ENCODE measurements at regions of chr14 and their contacts with region 1.

Region 1: GRCh38 chr14:101761032-101761880 is at the start of gene PPP2R5C:
- DNase-seq: peak; percentile 81
- ATAC-seq: peak; percentile 63
- H3K4me3 Mint-ChIP-seq: peak within 1 kb of the TSS; percentile 88
- H3K27ac Mint-ChIP-seq: peak within 1 kb of the TSS; percentile 77
- H3K4me1 Mint-ChIP-seq: peaks cover 18% of the 10 kb centered on the region
- H3K27me3 Mint-ChIP-seq: no peaks in the 10 kb centered on the region
- CTCF ChIP-seq: no peak
- total RNA-seq, gene PPP2R5C: 197 and 227 TPM in 2 replicates

Region 2: GRCh38 chr14:101731187-101732080 is 29.8 kb before region 1 on chr14:
- CTCF ChIA-PET with region 1: no interaction called
- POLR2A ChIA-PET with region 1: interaction called, 6 read pairs
- intact Hi-C with region 1: loop called (anchors 1 kb)
- DNase-seq: peak; percentile 34
- ATAC-seq: peak; percentile 96
- H3K4me3 Mint-ChIP-seq: peak overlapping the region; percentile 16
- H3K27ac Mint-ChIP-seq: peak overlapping the region; percentile 54
- H3K4me1 Mint-ChIP-seq: peaks cover 22% of the 10 kb centered on the region
- H3K27me3 Mint-ChIP-seq: peaks cover 3% of the 10 kb centered on the region
- CTCF ChIP-seq: no peak

Region 3: DNA sequence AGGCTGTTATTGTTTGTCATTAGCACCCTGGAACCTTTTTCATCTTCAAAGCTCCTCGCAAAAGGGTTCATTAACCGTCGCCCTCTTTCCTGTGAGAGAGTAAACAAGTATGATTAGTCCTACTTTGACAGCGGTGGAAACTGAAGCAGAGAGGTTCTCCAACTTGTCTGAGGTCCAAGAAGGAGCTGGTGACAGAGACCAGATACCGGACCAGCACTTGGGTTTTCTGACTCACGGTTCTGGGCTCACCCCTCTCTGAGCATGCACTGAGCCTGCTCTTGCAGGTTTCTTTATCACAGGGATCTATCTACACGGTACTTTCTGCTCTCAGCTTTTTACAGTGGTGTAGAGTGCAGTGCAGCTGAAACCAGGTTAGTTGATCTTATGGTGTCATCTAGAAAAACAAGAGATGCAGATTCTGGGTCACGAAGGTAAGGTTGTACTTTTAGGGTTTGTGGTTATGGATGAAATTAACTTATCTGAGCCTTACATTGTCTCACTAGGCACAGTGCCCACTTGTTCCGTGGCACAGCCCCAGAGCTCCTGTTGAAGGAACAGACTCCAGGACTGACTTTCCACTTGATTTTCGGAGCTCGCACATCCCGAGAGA is 62.4 kb after region 1 on chr14:
- CTCF ChIA-PET with region 1: no interaction called
- POLR2A ChIA-PET with region 1: interaction called, 15 read pairs
- intact Hi-C with region 1: no loop called
- DNase-seq: no peak
- ATAC-seq: peak; percentile 31
- H3K4me3 Mint-ChIP-seq: peak overlapping the region; percentile 80
- H3K27ac Mint-ChIP-seq: peak overlapping the region; percentile 99
- H3K4me1 Mint-ChIP-seq: peaks cover 91% of the 10 kb centered on the region
- H3K27me3 Mint-ChIP-seq: no peaks in the 10 kb centered on the region
- CTCF ChIP-seq: no peak

Region 4: DNA sequence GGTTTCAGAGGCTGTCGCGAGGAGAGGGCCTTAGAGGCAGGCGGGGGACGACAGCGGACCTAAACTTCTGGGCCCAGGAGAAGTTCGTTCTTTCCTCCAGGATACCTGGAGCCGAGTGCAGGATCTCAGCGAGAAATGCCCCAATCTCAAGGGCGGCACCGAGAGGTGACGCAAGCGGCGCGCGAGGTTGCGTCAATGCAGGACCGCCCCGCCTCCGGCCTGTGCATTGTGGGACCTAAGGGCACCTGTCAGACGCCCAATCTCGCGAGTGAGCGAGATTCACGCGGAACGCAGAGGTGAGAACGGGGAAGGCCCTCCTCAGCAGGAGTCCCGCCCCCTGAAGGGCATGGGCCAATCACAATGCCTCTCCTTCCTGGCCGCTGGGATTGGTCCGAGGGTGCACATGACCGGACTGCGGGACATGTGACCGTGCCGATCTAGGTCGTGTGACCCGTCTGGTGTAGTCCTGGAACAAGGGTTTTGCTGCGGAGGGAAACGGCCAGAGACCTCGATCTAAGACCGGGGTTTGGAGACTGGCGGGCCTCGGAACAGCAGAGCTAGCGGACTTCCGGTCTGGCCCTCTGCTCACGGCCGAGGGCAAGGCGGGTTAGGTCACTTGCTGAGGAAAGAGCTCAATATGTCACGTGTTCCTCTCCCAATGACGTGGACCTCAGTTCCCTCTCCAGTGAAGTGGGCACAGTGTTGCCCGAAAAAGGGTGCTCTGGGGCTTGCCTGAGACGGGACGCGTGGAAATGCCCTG is 186.8 kb after region 1 on chr14:
- CTCF ChIA-PET with region 1: no interaction called
- POLR2A ChIA-PET with region 1: interaction called, 13 read pairs
- intact Hi-C with region 1: loop called (anchors 1 kb)
- DNase-seq: peak; percentile 98
- ATAC-seq: peak; percentile 95
- H3K4me3 Mint-ChIP-seq: peak overlapping the region; percentile 93
- H3K27ac Mint-ChIP-seq: peak overlapping the region; percentile 97
- H3K4me1 Mint-ChIP-seq: peaks cover 19% of the 10 kb centered on the region
- H3K27me3 Mint-ChIP-seq: peaks cover 22% of the 10 kb centered on the region
- CTCF ChIP-seq: no peak

Region 5: GRCh38 chr14:102139248-102140026 is 378.2 kb after region 1 on chr14 and contains the start of gene WDR20:
- CTCF ChIA-PET with region 1: no interaction called
- POLR2A ChIA-PET with region 1: no interaction called
- intact Hi-C with region 1: loop called (anchors 2 kb)
- DNase-seq: peak; percentile 99
- ATAC-seq: peak; percentile 94
- H3K4me3 Mint-ChIP-seq: peak within 1 kb of the TSS; percentile 97
- H3K27ac Mint-ChIP-seq: peak within 1 kb of the TSS; percentile 93
- H3K4me1 Mint-ChIP-seq: peaks cover 19% of the 10 kb centered on the region
- H3K27me3 Mint-ChIP-seq: no peaks in the 10 kb centered on the region
- CTCF ChIP-seq: no peak
- total RNA-seq, gene WDR20: 41.1 and 42.3 TPM in 2 replicates

Region 6: GRCh38 chr14:102272392-102272791 is 511.1 kb after region 1 on chr14:
- CTCF ChIA-PET with region 1: no interaction called
- POLR2A ChIA-PET with region 1: no interaction called
- intact Hi-C with region 1: no loop called
- DNase-seq: no peak
- ATAC-seq: no peak
- H3K4me3 Mint-ChIP-seq: no peak overlapping the region
- H3K27ac Mint-ChIP-seq: no peak overlapping the region
- H3K4me1 Mint-ChIP-seq: no peaks in the 10 kb centered on the region
- H3K27me3 Mint-ChIP-seq: peaks cover 7% of the 10 kb centered on the region
- CTCF ChIP-seq: no peak

Region 7: GRCh38 chr14:102362545-102363181 is 601.4 kb after region 1 on chr14 and contains the starts of genes CINP and TECPR2:
- CTCF ChIA-PET with region 1: no interaction called
- POLR2A ChIA-PET with region 1: no interaction called
- intact Hi-C with region 1: loop called (anchors 1 kb)
- DNase-seq: peak; percentile 92
- ATAC-seq: peak; percentile 82
- H3K4me3 Mint-ChIP-seq: no peak within 1 kb of the TSS
- H3K27ac Mint-ChIP-seq: peak within 1 kb of the TSS; percentile 97
- H3K4me1 Mint-ChIP-seq: peaks cover 35% of the 10 kb centered on the region
- H3K27me3 Mint-ChIP-seq: no peaks in the 10 kb centered on the region
- CTCF ChIP-seq: no peak
- total RNA-seq, gene CINP: 48.6 and 57.5 TPM in 2 replicates
- total RNA-seq, gene TECPR2: 9.9 and 11.8 TPM in 2 replicates

Measured in activated B cell treated with CpG ODN at 0.5 μM for 24 hours (primary cell).